Heart right ventricle (tissue), 16 donors: ENCODE measurements at regions of chr22 and their contacts with region 1.

Region 1: GRCh38 chr22:47281126-47282106 is 519.0 kb downstream of the TBC1D22A start:
- DNase-seq: no peak
- ATAC-seq: no peak
- H3K4me3 ChIP-seq: no peak overlapping the region
- H3K27ac ChIP-seq: no peak overlapping the region
- H3K4me1 ChIP-seq: no peaks in the 10 kb centered on the region
- H3K27me3 ChIP-seq: peaks cover 0 to 75% (median 40%) of the 10 kb centered on the region in 7 donors
- CTCF ChIP-seq: no peak

Region 2: DNA sequence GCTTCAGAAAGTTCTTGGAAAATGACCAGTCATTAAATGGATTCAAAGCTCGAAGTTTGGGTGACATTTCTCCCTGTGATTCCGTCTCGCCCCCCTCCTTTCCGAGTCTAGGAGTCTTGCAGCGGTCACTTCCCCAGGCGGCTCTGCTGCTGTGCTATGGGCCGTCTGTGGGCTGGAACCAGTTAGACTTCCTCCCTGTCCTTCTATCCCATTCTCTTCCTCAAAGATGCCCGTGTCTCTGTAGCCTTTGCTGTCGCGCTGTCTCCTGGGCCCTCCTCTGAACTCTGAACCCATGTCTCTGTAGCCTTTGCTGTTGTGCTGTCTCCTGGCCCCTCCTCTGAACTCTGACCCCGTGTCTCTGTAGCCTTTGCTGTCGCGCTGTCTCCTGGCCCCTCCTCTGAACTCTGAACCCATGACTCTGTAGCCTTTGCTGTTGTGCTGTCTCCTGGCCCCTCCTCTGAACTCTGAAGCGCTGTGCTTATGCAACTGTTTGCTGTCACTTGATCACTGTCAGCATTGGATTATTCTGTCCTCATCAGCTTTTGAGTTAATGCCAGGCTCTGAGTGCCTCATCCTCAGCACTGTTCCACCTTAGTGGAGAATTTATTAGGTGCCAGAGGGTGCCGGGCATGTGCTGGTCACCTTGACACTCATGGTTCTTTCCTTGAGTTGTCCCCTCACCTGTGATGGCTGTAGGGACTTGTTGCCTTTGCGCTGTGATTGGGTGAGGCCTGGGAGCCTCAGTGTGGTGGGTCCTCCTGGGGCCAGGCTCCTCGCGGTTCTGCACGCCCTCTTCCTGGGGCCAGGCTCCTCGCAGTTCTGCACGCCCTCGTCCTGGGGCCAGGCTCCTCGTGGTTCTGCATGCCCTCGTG is 345.7 kb before region 1 on chr22:
- intact Hi-C with region 1: no loop called
- DNase-seq: peak in 1 of 2 donors; percentile 13
- ATAC-seq: peak; percentile 48 to 88 (median 75)
- H3K4me3 ChIP-seq: no peak overlapping the region
- H3K27ac ChIP-seq: peak overlapping the region in 2 of 10 donors; percentile 15 to 56
- H3K4me1 ChIP-seq: peaks cover 0 to 20% (median 3%) of the 10 kb centered on the region in 9 donors
- H3K27me3 ChIP-seq: no peaks in the 10 kb centered on the region
- CTCF ChIP-seq: no peak

Region 3: GRCh38 chr22:47209040-47209514 is 72.3 kb before region 1 on chr22:
- intact Hi-C with region 1: no loop called
- DNase-seq: no peak
- ATAC-seq: no peak
- H3K4me3 ChIP-seq: no peak overlapping the region
- H3K27ac ChIP-seq: no peak overlapping the region
- H3K4me1 ChIP-seq: no peaks in the 10 kb centered on the region
- H3K27me3 ChIP-seq: peaks cover 0 to 18% (median 8%) of the 10 kb centered on the region in 7 donors
- CTCF ChIP-seq: no peak

Region 4: GRCh38 chr22:47221840-47222615 is 59.4 kb before region 1 on chr22:
- intact Hi-C with region 1: loop called in 1 of 10 experiments (anchors 10 kb)
- DNase-seq: no peak
- ATAC-seq: no peak
- H3K4me3 ChIP-seq: no peak overlapping the region
- H3K27ac ChIP-seq: no peak overlapping the region
- H3K4me1 ChIP-seq: no peaks in the 10 kb centered on the region
- H3K27me3 ChIP-seq: peaks cover 0 to 13% (median 0%) of the 10 kb centered on the region in 7 donors
- CTCF ChIP-seq: no peak